Gastrocnemius medialis (tissue), 4 donors: ENCODE measurements at regions of chr9 and their contacts with region 1.

Region 1: DNA sequence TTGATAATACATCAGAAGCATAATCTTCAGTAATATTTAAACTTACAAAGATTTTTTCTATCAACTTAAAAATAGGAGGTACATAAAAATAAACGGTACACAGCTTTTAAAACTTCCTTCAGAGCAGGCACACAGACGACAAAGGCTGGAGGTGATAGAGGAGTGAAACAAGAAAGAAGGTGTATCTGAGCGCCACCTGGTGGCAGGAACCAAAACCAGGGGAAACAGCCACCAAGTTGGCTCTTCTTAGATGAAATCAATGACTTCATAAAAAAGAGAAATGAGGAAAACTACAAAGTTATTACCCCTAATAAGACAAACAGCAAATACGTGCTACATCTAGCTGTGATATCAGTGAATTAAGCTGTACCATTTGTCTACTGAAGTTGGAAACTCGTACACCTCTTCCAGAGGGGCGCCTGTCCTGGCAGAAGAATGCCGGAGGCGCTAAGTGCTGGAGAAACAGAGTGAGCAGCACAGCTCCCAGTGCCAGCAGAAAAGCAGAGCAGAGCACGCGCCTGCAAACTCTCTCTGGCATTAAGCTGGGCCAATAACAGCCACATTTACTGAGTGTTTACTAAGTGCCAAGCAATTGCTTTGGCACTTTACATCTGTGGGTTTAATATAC is 85.9 kb downstream of the SETX start:
- DNase-seq: peak in 1 of 2 donors; percentile 58
- ATAC-seq: peak in 1 of 2 donors; percentile 71
- H3K4me3 ChIP-seq: no peak overlapping the region
- H3K27ac ChIP-seq: peak overlapping the region; percentile 70 to 72 (median 72)
- H3K4me1 ChIP-seq: peaks cover 0 to 4% of the 10 kb centered on the region in 2 donors
- H3K27me3 ChIP-seq: no peaks in the 10 kb centered on the region
- CTCF ChIP-seq: peak; percentile 69 to 85 (median 76)
- POLR2A ChIP-seq: no peak

Region 2: DNA sequence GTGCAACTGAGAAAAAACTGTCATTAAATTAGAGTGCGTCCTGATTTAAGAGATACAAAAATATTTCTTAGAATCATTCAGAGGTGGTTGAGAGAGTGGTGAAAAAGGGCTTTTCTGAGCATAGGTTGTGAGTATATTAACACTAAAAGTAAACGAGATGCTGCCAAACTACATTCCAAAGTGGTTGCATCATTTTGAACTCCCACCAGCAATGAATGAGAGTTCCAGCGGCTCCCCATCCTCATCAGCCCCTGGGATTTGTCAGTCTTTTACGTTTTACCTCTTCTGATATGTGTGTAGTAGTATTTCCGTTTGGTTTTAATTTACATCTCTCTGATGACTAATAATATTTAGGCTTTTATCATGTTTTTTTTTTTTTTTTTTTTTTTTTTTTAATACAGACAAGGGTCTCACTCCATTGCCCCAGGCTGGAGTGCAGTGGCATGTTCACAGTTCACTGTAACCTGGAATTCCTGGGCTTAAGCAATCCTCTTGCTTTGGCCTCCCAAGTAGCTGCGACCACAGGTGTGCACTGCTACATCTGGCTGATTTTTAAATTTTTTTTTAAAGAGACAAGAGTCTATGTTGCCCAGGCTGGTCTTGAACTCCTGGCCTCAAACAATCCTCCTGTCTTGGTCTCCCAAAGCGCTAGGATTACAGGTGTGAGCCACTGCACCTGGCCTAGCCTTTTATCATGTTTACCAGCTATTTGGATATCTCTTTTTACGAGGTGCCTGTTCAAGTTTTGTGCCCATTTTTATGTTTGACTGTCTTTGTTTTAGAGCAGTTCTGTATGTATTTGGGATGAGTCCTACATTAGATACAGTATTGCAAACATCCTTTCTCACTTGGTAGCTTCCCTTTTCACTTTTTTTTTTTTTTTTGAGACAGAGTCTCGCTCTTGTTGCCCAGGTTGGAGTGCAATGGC is 706.5 kb before region 1 on chr9:
- in situ Hi-C with region 1: loop called in 2 of 4 experiments (anchors 25 kb)
- intact Hi-C with region 1: no loop called
- DNase-seq: no peak
- ATAC-seq: no peak
- H3K4me3 ChIP-seq: no peak overlapping the region
- H3K27ac ChIP-seq: no peak overlapping the region
- H3K4me1 ChIP-seq: no peaks in the 10 kb centered on the region
- H3K27me3 ChIP-seq: no peaks in the 10 kb centered on the region
- CTCF ChIP-seq: no peak
- POLR2A ChIP-seq: no peak

Region 3: GRCh38 chr9:131590908-131591844 is 677.7 kb before region 1 on chr9:
- in situ Hi-C with region 1: loop called in 1 of 4 experiments (anchors 25 kb)
- intact Hi-C with region 1: no loop called
- DNase-seq: peak; percentile 55 to 83
- ATAC-seq: peak; percentile 70 to 77
- H3K4me3 ChIP-seq: no peak overlapping the region
- H3K27ac ChIP-seq: peak overlapping the region; percentile 18 to 73 (median 62)
- H3K4me1 ChIP-seq: peaks cover 0 to 8% of the 10 kb centered on the region in 2 donors
- H3K27me3 ChIP-seq: no peaks in the 10 kb centered on the region
- CTCF ChIP-seq: peak; percentile 94 to 98 (median 96)
- POLR2A ChIP-seq: no peak

Region 4: DNA sequence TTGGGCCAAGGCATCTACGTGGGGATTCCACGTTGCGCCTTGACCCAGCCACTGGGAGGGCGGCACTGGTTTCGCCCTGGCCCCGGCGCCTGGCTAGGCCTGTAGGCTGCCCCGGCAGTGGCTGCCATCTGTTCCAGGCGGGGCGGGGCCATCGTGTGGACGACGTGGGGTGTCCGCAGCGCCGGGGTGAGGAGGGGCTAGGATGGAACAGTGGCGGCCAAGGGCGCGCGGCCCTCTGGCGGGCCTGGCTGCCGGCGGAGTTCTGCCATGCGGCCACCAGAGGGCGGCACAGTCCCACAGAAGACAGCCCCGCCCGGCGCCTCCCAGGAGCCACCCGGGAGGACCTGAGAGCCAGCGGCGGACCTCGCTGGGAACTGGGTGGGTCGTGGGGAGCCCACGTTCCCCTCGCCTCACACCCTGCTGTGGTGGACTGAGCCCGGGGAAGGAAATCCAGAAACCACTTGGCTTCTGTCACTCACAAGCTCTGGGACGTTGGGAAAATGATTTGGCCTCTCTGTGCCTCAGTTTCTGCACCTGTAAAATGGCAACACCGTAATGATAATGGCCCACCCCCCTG is 506.4 kb before region 1 on chr9:
- in situ Hi-C with region 1: no loop called
- intact Hi-C with region 1: loop called (anchors 5 kb)
- DNase-seq: peak; percentile 21 to 47
- ATAC-seq: peak; percentile 68 to 81
- H3K4me3 ChIP-seq: peak overlapping the region in 1 of 4 donors; percentile 22
- H3K27ac ChIP-seq: no peak overlapping the region
- H3K4me1 ChIP-seq: no peaks in the 10 kb centered on the region
- H3K27me3 ChIP-seq: peaks cover 0 to 3% (median 0%) of the 10 kb centered on the region in 3 donors
- CTCF ChIP-seq: peak; percentile 92 to 98 (median 96)
- POLR2A ChIP-seq: no peak